Activated T-helper 1 cell treated with anti-CD3 and anti-CD28 coated beads, Interleukin-12 subunit alpha, Interleukin-12 subunit beta, Interleukin-2, Interleukin-4 antibody, amounts not matched to agents 30 ng/mL and 10 ng/mL and 1 ng/mL, durations not matched to agents 14 hours and 24 hours and 36 hours (primary cell): ENCODE measurements at regions of chr7 and their contacts with region 1.

Region 1: DNA sequence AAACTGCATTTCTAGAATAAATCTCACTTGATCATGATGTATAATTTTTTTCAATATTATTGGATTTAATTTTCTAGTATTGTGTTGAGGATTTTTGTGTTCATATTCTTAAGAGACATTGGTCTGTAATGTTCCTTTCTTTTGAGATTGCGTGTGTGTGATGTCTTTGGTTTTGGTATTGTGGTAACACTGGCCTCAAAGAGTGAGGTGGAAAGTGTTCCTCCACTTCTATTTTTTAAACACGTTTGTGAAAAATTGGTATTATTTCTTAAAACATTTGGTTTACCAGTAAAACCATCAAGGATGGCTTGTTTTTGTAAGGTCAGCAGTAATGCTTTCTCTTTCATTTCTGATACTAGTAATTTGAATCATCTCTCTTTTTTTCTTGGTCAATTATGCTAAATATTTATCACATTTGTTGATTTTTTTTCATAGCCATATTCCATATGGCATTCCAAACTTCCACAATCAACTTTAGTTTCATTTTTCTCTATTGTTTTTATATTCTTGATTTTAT is 290.2 kb upstream of the CDC14C start:
- DNase-seq: no peak
- H3K4me3 Mint-ChIP-seq: no peak overlapping the region
- H3K27ac Mint-ChIP-seq: peak overlapping the region; percentile 23
- H3K4me1 Mint-ChIP-seq: peaks cover 46% of the 10 kb centered on the region
- H3K27me3 Mint-ChIP-seq: no peaks in the 10 kb centered on the region

Region 2: DNA sequence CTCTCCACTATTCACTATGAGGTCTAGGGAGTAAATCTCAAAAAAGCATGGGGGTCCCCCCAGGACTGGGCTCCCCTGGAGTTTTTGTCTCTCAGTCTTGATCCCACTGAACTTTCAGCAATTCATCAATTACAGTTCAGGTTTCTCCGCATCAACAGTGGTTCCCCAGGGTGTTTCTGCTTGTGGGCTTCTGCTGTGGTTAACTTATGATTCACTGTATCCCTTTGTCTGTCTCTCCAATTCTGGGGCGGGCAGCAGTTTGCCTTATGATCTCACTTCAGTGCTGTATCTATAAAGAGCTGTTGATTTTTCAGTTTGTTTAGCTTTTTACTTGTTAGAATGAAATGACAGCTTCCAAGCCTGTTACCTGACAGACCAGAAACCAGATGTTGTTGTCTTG is 147.6 kb after region 1 on chr7:
- intact Hi-C with region 1: loop called (anchors 5 kb)
- DNase-seq: no peak
- H3K4me3 Mint-ChIP-seq: no peak overlapping the region
- H3K27ac Mint-ChIP-seq: no peak overlapping the region
- H3K4me1 Mint-ChIP-seq: no peaks in the 10 kb centered on the region
- H3K27me3 Mint-ChIP-seq: peaks cover 2% of the 10 kb centered on the region